ENCODE measurements at regions of chr16 and their contacts with region 1.

Region 1: DNA sequence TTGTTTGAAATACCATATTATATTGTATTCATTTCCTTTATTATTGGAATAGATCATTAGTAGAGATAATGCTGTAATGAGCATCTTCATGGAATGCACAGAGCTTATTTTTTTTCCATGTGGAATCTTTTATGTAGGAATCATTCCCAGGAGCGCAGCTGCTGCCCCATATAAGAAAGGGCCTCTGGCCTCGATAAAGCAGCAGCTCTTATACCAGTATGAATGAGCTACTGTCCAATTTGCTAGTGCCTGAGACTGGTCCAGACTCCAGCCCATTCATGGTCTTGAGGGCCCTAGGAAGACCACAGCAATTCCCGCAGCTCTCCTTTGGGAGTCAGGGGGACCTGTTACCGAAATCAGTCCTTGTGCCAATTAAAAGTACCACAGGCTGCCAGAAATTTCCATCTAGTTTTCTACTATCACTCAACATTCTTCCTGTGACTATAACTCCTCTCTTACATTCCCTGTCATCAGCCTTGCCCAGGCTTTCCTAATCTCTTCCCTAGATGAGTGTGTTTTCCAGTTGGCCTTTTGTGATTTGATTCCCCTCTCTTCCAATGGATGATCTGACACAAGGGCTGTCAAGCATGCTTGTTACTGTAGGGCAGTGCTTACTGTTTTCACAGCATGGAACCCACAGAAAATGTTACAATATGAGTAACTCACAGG is 1.9 kb downstream of the ZNF843 start:
- DNase-seq: no peak
- ATAC-seq: no peak
- H3K4me3 Mint-ChIP-seq: no peak overlapping the region
- H3K27ac Mint-ChIP-seq: no peak overlapping the region
- H3K4me1 Mint-ChIP-seq: peaks cover 19% of the 10 kb centered on the region
- H3K27me3 Mint-ChIP-seq: peaks cover 6% of the 10 kb centered on the region
- CTCF ChIP-seq: no peak

Region 2: GRCh38 chr16:31427441-31428278 is 13.0 kb before region 1 on chr16:
- CTCF ChIA-PET with region 1: interaction called, 12 read pairs
- POLR2A ChIA-PET with region 1: interaction called, 4 read pairs
- intact Hi-C with region 1: no loop called
- DNase-seq: peak; percentile 71
- ATAC-seq: peak; percentile 67
- H3K4me3 Mint-ChIP-seq: no peak overlapping the region
- H3K27ac Mint-ChIP-seq: no peak overlapping the region
- H3K4me1 Mint-ChIP-seq: peaks cover 19% of the 10 kb centered on the region
- H3K27me3 Mint-ChIP-seq: peaks cover 10% of the 10 kb centered on the region
- CTCF ChIP-seq: no peak